ENCODE measurements at regions of chr17 and their contacts with region 1.

Region 1: GRCh38 chr17:7856883-7857723 is at the start of gene NAA38:
- DNase-seq: peak; percentile 96
- total RNA-seq, gene NAA38: 68.8 TPM

Region 2: DNA sequence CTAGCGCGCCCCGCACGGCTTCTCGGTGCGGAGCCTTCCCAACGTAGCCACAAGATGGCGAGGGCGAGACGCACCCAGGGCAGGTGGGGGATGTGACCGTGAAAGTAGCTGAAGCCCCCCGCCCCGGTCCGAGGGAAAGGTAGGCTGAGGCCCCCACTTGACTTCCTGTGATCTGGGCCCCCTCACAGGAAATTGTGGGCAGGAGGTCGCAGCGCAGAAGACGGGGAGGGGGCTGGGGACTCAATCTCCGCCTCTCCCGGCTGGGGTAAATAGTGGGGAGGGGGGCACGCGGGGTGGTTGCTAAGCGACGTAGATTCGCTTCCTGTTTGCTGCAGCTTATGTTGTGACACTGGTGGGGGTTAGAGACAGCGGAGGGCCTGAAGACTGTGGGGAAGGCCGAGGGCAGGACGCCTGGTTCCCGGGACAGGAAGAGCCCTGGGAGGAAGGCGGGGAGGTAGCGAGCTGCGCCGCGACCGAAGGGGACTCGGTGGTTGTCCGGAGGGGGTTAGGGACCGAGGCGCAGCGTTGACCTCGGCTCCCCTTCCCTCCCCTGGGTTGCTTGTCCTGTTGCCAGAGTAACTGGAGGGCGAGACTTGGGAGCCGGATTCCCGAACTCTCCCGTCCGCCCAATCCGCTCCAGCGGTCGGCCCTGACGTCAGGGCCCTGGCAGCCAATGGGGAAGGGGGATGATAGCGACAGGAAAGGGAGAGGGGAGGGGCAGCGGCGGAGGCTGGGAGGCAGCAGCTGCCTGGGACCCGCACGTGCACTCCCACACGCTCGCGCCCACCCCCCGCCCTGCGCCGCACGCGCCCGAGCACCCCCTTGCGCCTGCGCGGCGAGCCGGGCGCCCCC is 21.9 kb before region 1 on chr17:
- intact Hi-C with region 1: loop called (anchors 2 kb)
- DNase-seq: peak; percentile 99

Region 3: DNA sequence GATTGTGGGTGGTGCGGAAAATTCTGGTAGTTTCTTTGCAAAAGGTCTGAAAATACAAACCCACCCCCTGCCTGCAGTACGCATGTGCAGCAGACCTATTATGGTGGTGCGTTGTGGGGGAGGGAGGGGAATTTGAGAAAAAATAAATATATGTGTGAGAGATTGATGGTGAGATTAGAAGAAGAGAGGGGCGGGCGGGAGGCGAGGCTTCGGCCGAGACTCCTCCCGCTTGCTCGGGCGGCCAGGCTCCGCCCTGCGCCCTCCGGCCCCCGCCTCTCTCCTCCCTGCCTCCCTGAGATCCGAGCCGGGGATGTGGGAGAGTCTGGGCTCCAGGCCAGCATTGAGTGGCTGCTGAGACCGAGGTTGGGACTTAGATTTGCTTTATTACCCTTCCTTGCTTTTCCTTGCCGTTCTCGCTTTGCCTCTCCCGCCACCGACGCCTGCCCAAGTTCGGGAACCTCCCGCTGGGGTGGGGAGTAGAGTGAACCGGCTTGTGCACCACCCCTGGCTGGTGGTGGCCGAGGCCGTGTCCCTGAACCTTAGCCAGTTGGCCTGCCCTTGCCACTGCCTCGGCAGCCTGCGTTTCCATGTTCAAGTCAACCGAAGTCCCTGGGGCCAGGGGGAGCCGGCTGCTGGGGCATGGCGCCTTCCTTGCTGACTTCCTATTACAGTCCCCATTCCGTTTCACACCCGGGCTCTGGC is 30.5 kb after region 1 on chr17:
- intact Hi-C with region 1: loop called (anchors 1 kb)
- DNase-seq: peak; percentile 95